Common myeloid progenitor, CD34-positive (primary cell): ENCODE measurements at regions of chr19 and their contacts with region 1.

Region 1: GRCh38 chr19:10269333-10270179 is 1.4 kb upstream of the ICAM1 start:
- DNase-seq: peak; percentile 84 to 94 (median 91)
- H3K4me3 ChIP-seq: peak overlapping the region in 6 of 7 experiments; percentile 25 to 73 (median 61)
- H3K27ac ChIP-seq: peak overlapping the region in 1 of 2 experiments; percentile 83
- H3K4me1 ChIP-seq: peaks cover 0 to 35% (median 28%) of the 10 kb centered on the region in 4 experiments
- H3K27me3 ChIP-seq: no peaks in the 10 kb centered on the region

Region 2: DNA sequence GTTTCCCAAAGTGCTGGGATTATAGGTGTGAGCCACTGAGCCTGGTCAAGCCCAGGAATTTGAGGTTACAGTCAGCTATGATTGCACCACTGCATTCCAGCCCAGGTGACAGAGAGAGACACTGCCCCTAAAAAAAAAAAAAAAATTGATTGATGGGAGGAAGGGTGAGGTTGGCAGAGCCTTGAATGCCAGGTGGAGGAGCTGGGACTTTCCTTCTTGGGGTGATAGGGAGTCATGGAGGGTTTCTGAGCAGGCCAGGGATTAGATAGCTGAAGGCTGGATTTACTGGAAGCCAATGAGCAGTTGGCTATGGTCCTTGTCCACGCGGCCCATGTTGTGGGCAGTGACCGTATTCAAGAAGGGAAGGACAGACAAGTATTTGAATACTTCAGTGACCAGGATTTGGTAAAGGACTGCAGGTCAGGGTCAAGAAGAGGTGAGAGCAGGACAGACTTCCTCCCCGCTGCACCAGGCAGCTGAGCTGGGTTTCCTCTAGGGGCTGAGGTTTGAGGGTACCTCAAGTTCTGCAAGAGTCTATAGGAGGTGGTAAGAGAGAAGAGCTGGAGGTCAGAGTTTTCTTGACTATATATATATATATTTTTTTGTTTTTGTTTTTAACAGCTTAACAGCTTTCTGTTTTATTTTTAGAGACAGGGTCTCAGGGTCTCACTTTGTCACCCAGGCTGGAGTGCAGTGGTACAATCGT is 10.3 kb after region 1 on chr19:
- CTCF ChIA-PET with region 1: interaction called, 41 read pairs
- POLR2A ChIA-PET with region 1: interaction called, 60 read pairs
- DNase-seq: peak in 1 of 3 donors; percentile 43
- H3K4me3 ChIP-seq: no peak overlapping the region
- H3K27ac ChIP-seq: no peak overlapping the region
- H3K4me1 ChIP-seq: peaks cover 5 to 17% (median 13%) of the 10 kb centered on the region in 4 experiments
- H3K27me3 ChIP-seq: no peaks in the 10 kb centered on the region

Region 3: GRCh38 chr19:10292206-10292788 is 22.7 kb after region 1 on chr19:
- CTCF ChIA-PET with region 1: interaction called, 83 read pairs
- POLR2A ChIA-PET with region 1: interaction called, 60 read pairs
- DNase-seq: peak; percentile 72 to 75 (median 75)
- H3K4me3 ChIP-seq: peak overlapping the region; percentile 2 to 76 (median 54)
- H3K27ac ChIP-seq: peak overlapping the region in 1 of 2 experiments; percentile 54
- H3K4me1 ChIP-seq: peaks cover 5 to 91% (median 83%) of the 10 kb centered on the region in 4 experiments
- H3K27me3 ChIP-seq: peaks cover 0 to 70% (median 52%) of the 10 kb centered on the region in 5 experiments

Region 4: DNA sequence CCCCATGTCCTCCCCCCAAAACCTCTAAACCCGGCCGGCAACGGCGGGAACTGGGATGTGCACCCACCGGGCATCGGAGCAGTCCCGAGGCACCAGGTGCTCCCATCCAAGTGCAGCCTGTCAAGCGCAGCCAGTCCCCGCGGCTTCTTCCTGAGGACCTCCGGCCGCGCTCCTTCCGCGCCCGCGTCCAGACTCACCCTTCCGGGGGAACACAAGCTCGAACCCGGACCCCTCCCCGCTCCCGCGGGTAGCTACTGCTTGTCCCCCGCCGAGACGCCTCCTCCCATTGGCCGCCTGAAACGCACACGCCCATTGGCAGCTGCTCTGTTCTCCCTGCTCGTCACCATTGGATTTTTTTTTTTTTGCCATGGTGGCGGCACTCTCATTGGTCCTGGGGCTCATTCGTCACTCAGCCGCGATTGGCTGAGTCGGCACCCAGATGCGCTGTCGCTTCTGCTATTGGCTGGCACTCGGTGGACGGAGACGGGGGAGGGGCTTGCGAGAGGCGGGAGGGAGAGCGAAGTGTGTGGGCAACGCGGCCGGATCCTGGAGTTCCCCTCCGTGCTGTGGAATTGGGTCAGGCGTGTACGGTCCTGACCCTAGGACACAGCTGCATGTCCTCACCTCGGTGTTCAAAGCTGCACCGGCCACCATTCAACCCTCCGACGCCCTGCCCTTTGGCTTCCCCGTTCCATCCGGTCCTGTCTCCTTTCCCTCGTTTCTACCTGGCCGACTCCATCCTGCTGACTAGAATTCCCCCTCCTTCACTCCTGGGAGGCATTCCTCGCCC is 111.0 kb after region 1 on chr19 and contains the start of gene TYK2:
- CTCF ChIA-PET with region 1: interaction called, 542 read pairs
- POLR2A ChIA-PET with region 1: interaction called, 9 read pairs
- DNase-seq: peak; percentile 98 to 99 (median 98)
- H3K4me3 ChIP-seq: peak within 1 kb of the TSS; percentile 78 to 97 (median 93)
- H3K27ac ChIP-seq: peak within 1 kb of the TSS; percentile 64 to 85
- H3K4me1 ChIP-seq: peaks cover 3 to 13% (median 12%) of the 10 kb centered on the region in 4 experiments
- H3K27me3 ChIP-seq: no peaks in the 10 kb centered on the region